ENCODE measurements at regions of chr13 and their contacts with region 1.

Region 1: DNA sequence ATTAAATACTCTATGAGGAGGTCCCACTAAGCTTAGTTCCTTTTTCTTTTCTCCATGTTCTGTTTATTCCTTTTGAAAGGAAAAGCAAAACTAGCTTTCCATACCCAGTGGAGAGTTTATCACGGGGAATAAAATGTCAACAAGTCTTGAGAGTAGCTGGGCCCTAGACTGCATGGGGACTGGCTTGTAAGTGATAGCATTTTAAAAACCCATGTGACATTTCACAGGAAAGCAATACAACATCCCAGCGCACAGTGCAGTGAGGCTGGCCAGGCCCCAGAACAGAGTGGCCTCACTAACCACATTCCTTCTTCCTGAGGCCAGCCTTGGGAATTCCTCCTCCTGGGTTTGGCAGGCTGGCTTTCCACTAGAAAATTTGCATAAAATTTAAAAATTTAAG is 149.8 kb downstream of the DLEU7 start:
- DNase-seq: peak; percentile 62 to 64
- ATAC-seq: peak; percentile 87 to 96 (median 93)
- H3K4me3 ChIP-seq: peak overlapping the region in 1 of 10 donors; percentile 11
- H3K27ac ChIP-seq: peak overlapping the region; percentile 55 to 91 (median 68)
- H3K4me1 ChIP-seq: peaks cover 8 to 68% (median 58%) of the 10 kb centered on the region in 9 donors
- H3K27me3 ChIP-seq: no peaks in the 10 kb centered on the region
- CTCF ChIP-seq: no peak

Region 2: DNA sequence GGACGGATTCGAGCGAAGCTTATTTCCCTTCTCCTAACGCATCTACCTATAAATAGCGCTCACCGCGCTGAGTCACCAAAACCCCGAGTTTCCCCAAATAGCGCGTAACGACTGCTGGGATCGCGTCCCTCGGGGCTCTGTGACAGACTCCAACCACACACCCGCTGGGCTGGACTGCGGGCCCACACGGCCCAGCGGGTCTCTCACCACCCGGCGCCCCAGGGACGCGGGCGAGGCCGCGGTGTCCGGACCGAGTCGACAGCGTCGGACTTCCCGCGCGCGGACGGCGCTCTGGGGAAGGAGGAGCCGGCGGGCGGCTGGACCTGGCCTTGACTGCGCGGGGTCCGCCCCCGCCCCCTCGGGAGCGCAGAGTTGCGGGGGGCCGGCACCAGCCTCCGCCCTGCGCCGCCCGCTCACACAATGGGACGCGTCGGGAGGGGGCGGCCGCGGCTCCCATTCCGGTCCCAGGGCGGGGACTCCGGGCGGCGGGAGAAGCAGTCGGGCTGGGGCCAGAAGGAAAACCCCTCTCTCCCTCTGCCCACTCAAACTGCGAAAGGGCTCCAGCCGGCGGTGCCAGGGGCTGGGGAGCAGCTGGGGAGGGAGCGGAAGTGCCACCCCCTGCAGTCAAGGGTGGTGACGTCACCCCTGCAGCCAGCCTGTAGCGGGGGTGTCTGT is 569.7 kb before region 1 on chr13:
- intact Hi-C with region 1: loop called in 1 of 10 experiments (anchors 10 kb)
- DNase-seq: peak; percentile 87 to 97
- ATAC-seq: peak; percentile 86 to 95 (median 92)
- H3K4me3 ChIP-seq: peak overlapping the region; percentile 51 to 98 (median 94)
- H3K27ac ChIP-seq: peak overlapping the region; percentile 94 to 100 (median 100)
- H3K4me1 ChIP-seq: peaks cover 2 to 70% (median 53%) of the 10 kb centered on the region in 9 donors
- H3K27me3 ChIP-seq: peaks cover 0 to 14% (median 5%) of the 10 kb centered on the region in 7 donors
- CTCF ChIP-seq: peak in 2 of 9 donors; percentile 23 to 43

Region 3: DNA sequence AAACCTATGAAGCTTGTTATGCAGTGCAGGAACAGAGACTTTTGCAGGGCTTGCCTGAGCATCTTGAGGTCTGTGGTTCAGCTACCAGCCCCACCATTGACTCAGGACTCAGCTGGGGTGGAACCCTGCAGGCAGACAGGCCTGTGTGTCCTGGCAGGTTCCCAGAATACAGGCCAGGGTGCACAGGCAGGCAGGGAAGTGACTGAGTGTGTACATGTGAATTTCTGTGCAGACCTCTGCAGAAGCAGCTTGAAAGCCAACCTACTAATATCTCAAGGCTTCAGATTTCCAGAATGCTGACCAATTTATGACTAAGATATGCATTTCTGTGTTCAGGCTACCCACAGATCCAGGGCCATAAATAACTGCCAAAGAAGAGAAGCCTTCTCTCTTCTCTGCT is 104.6 kb before region 1 on chr13:
- intact Hi-C with region 1: loop called in 3 of 10 experiments (anchors 5 to 10 kb)
- DNase-seq: no peak
- ATAC-seq: peak in 3 of 8 donors; percentile 36 to 52 (median 45)
- H3K4me3 ChIP-seq: no peak overlapping the region
- H3K27ac ChIP-seq: no peak overlapping the region
- H3K4me1 ChIP-seq: peaks cover 0 to 41% (median 14%) of the 10 kb centered on the region in 9 donors
- H3K27me3 ChIP-seq: no peaks in the 10 kb centered on the region
- CTCF ChIP-seq: no peak

Region 4: GRCh38 chr13:50594276-50595051 is 99.3 kb before region 1 on chr13:
- intact Hi-C with region 1: loop called in 3 of 10 experiments (anchors 5 to 10 kb)
- DNase-seq: no peak
- ATAC-seq: peak in 1 of 8 donors; percentile 11
- H3K4me3 ChIP-seq: peak overlapping the region in 1 of 10 donors; percentile 3
- H3K27ac ChIP-seq: peak overlapping the region in 5 of 10 donors; percentile 18 to 68 (median 56)
- H3K4me1 ChIP-seq: peaks cover 0 to 60% (median 46%) of the 10 kb centered on the region in 9 donors
- H3K27me3 ChIP-seq: no peaks in the 10 kb centered on the region
- CTCF ChIP-seq: no peak

Measured in heart right ventricle (tissue), 16 donors.